GM10248 (cell line): ENCODE measurements at regions of chr19 and their contacts with region 1.

Region 1: GRCh38 chr19:30669329-30670010 is 297.3 kb downstream of the ZNF536 start:
- DNase-seq: peak; percentile 56
- CTCF ChIP-seq: peak; percentile 83

Region 2: GRCh38 chr19:30649934-30650614 is 19.4 kb before region 1 on chr19:
- CTCF ChIA-PET with region 1: interaction called, 16 read pairs
- POLR2A ChIA-PET with region 1: no interaction called
- DNase-seq: peak; percentile 57
- CTCF ChIP-seq: peak; percentile 68

Region 3: GRCh38 chr19:30656520-30657100 is 12.9 kb before region 1 on chr19:
- CTCF ChIA-PET with region 1: interaction called, 16 read pairs
- POLR2A ChIA-PET with region 1: no interaction called
- DNase-seq: no peak
- CTCF ChIP-seq: no peak

Region 4: GRCh38 chr19:30682999-30683536 is 13.6 kb after region 1 on chr19:
- CTCF ChIA-PET with region 1: interaction called, 59 read pairs
- POLR2A ChIA-PET with region 1: no interaction called
- DNase-seq: peak; percentile 78
- CTCF ChIP-seq: peak; percentile 97

Region 5: GRCh38 chr19:32224371-32225244 is 1555.1 kb after region 1 on chr19:
- CTCF ChIA-PET with region 1: interaction called, 51 read pairs
- POLR2A ChIA-PET with region 1: no interaction called
- DNase-seq: peak; percentile 86
- CTCF ChIP-seq: peak; percentile 96

Region 6: DNA sequence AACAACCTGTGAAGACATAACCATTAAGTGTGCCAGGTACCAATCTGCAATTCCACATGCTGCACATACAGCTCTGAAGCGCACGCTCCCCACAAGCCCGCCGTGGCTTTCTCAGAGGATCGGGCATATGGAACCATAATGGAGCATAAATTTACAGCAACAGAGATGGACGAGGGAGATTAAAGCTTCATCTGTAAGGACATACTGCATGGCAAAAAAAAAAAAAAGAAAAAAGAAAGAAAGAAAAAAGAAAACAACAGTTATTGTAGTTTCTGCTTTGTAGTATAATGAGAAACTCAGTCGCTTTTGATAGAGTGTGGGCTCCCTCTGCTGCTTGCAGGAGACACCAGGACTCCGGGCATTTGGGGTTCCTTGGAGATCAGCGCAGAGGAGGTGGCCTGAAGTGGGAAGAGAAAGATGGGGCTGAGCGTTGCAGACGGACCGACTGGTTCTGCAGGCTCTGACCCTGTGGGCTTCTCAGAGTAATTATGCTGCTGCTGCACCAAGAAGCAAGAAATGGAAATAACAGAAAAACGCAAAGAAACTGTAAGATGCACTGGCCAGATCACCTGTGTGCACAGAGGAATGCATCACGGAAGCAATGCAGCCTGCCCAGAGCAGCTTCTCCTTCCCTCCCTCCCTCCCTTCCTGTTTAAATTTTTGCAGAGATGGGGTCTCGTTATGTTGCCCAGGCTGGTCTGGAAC is 1900.8 kb after region 1 on chr19:
- CTCF ChIA-PET with region 1: interaction called, 15 read pairs
- POLR2A ChIA-PET with region 1: no interaction called
- DNase-seq: peak; percentile 52
- CTCF ChIP-seq: peak; percentile 81